ENCODE measurements at regions of chr6 and their contacts with region 1.

Region 1: GRCh38 chr6:47028835-47029360 is 13.2 kb downstream of the ADGRF1 start:
- DNase-seq: no peak
- H3K4me3 Mint-ChIP-seq: no peak overlapping the region
- H3K27ac Mint-ChIP-seq: no peak overlapping the region
- H3K4me1 Mint-ChIP-seq: peaks cover 8% of the 10 kb centered on the region
- H3K27me3 Mint-ChIP-seq: no peaks in the 10 kb centered on the region
- CTCF ChIP-seq: no peak

Region 2: DNA sequence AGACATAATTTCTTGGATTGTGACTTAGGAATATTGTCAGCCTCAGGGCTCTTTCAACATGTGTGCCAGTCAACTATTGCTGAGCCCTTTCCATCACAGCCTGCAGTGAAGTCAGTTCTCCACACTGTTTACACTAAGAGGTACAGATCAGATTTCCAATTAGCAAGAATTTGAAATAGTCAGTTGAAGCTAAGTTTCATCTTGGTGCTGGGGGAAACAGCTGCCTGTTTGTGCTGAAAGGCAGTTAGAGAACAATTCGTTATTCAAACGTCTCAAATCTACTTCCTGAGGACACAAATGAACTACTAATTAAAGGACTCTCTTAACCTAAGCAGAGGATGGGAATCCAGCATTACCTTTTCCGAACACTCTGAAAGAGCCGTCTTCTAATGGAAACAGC is 12.6 kb before region 1 on chr6:
- CTCF ChIA-PET with region 1: interaction called, 6 read pairs
- POLR2A ChIA-PET with region 1: interaction called, 10 read pairs
- intact Hi-C with region 1: no loop called
- DNase-seq: no peak
- H3K4me3 Mint-ChIP-seq: no peak overlapping the region
- H3K27ac Mint-ChIP-seq: no peak overlapping the region
- H3K4me1 Mint-ChIP-seq: no peaks in the 10 kb centered on the region
- H3K27me3 Mint-ChIP-seq: no peaks in the 10 kb centered on the region
- CTCF ChIP-seq: no peak

Measured in MCF 10A (cell line).